ENCODE measurements at regions of chr6 and their contacts with region 1.

Region 1: DNA sequence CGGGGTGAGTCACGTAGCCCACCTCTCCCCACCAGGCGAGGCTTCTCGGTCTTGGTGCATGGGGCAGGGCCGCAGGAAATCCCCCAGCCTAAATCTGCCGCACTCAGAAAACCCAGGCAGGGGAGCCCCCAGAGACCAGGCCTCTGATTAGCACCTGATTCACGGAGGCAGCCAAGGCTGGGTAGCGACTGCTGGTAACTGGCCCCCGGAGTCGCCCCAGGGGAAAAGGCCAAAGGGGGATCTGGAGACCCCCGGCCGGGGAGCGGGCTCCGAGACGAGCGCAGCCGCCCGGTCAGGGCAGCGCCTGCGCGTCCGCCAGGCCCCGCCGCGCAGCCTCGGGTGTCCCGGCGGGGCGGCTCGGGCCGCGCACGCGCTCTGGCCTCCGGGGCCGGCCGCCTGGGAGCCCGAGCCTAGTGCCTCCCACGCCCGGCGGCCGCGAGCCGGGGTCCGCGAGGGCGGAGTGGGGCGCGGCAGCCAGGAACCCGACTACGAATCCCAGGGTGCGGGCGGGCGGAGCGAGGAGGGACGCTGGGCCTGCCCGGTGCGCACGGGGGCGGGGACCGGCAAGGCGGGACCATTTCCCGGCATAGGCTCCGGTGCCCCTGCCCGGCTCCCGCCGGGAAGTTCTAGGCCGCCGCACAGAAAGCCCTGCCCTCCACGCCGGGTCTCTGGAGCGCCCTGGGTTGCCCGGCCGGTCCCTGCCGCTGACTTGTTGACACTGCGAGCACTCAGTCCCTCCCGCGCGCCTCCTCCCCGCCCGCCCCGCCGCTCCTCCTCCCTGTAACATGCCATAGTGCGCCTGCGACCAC is at the start of gene DUSP22:
- DNase-seq: peak; percentile 93
- total RNA-seq, gene DUSP22: 49.2 TPM

Region 2: DNA sequence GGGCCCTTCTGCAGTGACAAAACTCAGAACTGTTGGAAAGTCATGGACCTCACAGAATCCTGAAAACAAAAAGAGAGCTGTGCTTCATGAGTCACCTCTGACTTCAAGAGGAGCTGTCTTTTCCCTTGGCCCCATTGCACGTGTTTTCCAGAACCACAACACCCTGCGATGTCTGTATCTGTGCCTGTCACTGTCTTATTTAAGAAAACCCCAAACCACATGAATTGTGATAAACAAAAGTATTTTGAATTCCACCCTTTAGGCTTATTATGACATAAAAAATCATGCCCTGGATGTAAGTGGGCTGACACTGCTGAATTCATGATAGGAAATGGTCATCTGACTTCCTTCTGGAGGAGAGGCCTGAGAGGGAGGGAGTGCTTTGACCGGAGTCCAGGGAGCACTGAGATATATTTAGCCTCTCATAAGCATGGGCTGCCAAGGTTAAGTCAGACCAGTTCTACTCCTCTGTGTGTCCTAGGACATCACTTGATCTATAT is 96.0 kb before region 1 on chr6:
- intact Hi-C with region 1: loop called (anchors 1 kb)
- DNase-seq: no peak

Region 3: DNA sequence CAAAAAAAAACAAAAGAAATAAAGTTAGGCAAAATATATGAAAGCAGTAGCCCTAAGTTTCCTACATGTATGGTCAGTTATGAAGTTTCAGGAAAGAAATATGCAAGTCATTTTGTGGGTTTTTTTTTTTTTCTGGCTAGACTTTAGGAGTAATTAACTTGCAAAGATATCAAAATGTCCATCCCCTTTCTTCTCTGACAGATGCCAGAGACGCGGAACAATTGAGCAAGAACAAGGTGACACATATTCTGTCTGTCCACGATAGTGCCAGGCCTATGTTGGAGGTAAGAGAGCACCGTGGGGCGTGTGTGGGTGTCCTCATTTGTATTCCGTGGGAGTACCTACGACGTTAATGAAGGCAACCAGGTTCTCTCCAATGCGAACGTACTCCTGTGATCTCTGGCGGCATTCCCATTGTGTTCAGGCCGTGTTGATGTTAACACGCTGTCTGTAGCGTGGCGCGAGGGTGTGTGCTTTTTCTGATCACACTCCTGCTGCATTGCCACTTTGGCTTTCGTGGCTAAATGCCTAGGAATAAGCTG is 19.8 kb after region 1 on chr6:
- intact Hi-C with region 1: loop called (anchors 1 kb)
- DNase-seq: peak; percentile 76

Region 4: GRCh38 chr6:331622-332531 is 40.0 kb after region 1 on chr6:
- intact Hi-C with region 1: loop called (anchors 5 kb)
- DNase-seq: no peak

Region 5: GRCh38 chr6:341914-342831 is 50.3 kb after region 1 on chr6:
- intact Hi-C with region 1: no loop called
- DNase-seq: no peak

Region 6: DNA sequence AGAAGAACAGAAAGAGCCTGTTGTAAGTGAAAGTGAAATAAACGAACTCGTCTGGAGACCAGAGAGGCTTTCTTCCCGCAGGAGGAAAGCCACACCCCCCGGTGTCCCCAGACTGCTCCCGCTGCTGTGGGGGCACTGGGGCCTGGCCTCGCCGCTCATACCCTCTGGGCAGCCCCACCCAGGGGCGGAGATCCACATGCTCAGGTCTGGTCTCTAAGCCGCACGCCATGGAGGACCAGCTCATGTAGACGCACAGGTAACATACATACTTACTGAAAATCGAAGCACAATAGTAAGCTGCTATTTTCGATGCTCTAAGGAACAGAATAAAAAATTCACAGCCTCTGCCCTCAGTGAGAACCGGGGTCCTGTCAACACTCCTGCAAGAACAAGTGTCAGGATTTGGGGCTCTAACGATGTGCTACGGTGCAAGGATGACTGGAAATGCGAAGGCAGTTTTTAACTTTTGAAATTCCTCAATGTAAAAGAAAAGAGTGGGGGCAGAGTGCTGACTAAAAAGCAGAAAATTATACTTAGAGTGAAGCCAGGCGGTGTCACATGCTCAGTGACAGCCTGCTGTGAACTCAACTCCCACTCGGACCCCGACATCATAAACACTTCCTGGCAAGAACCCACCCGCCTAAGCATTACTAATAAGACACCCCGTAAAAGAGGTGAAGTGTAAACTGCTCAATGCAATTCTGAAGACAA is 210.1 kb after region 1 on chr6:
- intact Hi-C with region 1: loop called (anchors 5 kb)
- DNase-seq: no peak

Region 7: DNA sequence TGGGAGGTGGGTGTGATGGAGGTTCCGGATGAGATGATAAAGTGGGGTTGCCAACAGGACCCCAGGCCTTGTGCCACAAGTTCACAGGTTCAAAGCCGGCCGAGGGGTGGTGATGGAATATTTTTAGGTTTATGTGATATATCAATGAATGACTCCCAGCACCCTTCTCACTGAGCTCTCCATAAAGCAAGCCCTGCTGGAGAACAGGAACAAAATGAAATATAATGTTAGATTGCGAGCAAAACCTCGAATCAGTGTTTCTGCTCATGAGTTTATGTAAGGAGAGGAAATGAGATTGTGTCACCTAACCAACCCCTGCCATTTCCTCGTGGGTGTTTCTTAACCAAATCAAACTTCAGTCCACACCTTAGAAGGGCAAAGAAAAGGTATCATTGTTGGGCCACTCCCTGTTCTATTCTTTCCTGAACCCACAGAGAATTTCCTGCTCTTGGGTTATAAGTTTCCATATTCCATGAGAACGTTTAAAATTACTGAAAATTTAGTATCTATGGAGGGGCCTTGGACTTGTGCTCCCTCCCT is 593.2 kb after region 1 on chr6:
- intact Hi-C with region 1: no loop called
- DNase-seq: no peak

Measured in cardiac septum (tissue), 1 donor.